IMR-90 (cell line): ENCODE measurements at regions of chr9 and their contacts with region 1.

Region 1: GRCh38 chr9:124852829-124853531 is at the start of gene WDR38:
- DNase-seq: peak; percentile 66
- ATAC-seq: peak; percentile 88
- H3K4me3 ChIP-seq: peak within 1 kb of the TSS; percentile 43
- H3K27ac ChIP-seq: no peak within 1 kb of the TSS; the same call in 1 of the 2 replicates
- H3K4me1 ChIP-seq: no peaks in the 10 kb centered on the region
- H3K27me3 ChIP-seq: no peaks in the 10 kb centered on the region
- CTCF ChIP-seq: peak; percentile 84
- POLR2A ChIP-seq: peak; percentile 55; the same call in 1 of the 2 replicates
- RAD21 ChIP-seq: peak; percentile 87
- total RNA-seq, gene WDR38: not detected in 2 replicates

Region 2: DNA sequence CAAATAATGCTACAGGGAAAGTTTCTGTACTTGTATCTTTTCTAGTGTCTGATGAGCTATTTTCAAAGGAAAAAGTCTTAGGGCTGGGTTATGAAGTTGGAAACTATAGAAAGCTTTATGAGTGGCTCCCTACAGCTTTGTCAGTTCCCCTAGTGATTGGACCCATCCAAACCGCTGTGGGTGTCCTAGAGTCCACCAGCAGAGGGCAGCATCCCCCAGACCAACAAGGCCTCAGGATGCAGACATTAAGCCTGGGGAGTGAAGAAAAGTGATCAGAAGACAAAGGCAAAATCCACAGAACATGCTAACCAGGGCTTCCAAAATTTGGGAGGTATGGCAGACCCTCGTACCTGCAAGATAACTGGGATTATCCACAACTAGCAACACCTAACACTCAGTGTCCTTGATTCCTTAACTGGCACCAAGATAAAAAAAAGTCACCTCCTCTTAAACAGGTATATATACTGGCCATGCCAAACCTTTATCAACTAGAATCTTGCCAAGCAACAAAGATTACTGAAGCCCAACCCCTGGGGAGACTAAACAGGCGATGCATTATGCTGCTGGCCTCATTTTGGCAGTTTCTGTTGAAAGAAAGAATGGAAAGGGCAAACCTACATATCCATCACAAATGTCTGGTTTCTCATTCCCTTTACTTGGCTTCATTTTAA is 235.4 kb before region 1 on chr9:
- CTCF ChIA-PET with region 1: no interaction called
- POLR2A ChIA-PET with region 1: no interaction called
- dilution Hi-C with region 1: no loop called
- in situ Hi-C with region 1: no loop called
- intact Hi-C with region 1: loop called (anchors 10 kb)
- DNase-seq: peak; percentile 79
- ATAC-seq: peak; percentile 98
- H3K4me3 ChIP-seq: no peak overlapping the region
- H3K27ac ChIP-seq: no peak overlapping the region
- H3K4me1 ChIP-seq: peaks cover 2% of the 10 kb centered on the region
- H3K27me3 ChIP-seq: peaks cover 7% of the 10 kb centered on the region
- CTCF ChIP-seq: peak; percentile 97
- POLR2A ChIP-seq: peak; percentile 44; the same call in 1 of the 2 replicates
- RAD21 ChIP-seq: peak; percentile 98

Region 3: DNA sequence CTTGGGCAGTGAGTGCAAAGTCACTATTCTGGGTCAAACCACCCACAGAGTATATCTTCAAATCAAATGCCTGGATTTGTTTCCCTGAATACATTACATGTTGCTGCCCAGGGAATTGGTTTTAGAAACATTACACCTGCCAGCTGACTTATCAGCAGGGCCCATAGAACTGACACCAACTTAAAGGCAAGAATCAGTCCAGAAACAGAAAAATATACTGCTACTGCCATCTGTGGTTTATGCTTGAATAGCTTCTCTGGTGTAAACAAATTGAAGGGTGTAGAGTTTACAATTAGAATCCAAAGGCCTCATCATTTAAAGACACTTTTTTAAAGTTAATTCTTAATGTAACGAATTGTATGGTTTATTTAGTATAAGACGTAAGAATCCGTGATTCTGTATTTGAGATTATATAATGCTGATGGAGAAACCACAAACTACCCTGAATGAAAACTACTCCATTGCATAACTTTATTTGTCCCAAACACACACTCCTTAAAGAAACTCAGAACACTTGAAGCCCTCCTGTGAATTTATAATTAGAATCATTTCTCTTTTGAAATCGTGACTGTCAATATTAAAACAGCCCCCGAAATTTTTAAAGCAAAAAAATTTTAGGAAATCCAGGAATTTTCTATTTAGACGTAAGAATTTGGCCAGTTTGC is 88.1 kb before region 1 on chr9:
- CTCF ChIA-PET with region 1: interaction called, 165 read pairs
- POLR2A ChIA-PET with region 1: interaction called, 4 read pairs
- dilution Hi-C with region 1: no loop called
- in situ Hi-C with region 1: loop called (anchors 5 kb)
- intact Hi-C with region 1: no loop called
- DNase-seq: no peak
- ATAC-seq: peak; percentile 37
- H3K4me3 ChIP-seq: no peak overlapping the region
- H3K27ac ChIP-seq: no peak overlapping the region
- H3K4me1 ChIP-seq: no peaks in the 10 kb centered on the region
- H3K27me3 ChIP-seq: peaks cover 75% of the 10 kb centered on the region
- CTCF ChIP-seq: peak; percentile 40
- POLR2A ChIP-seq: no peak
- RAD21 ChIP-seq: peak; percentile 42

Region 4: GRCh38 chr9:124771021-124771866 is 81.7 kb before region 1 on chr9 and contains the start of gene NR6A1:
- CTCF ChIA-PET with region 1: interaction called, 165 read pairs
- POLR2A ChIA-PET with region 1: interaction called, 9 read pairs
- dilution Hi-C with region 1: no loop called
- in situ Hi-C with region 1: loop called (anchors 5 kb)
- intact Hi-C with region 1: loop called (anchors 1 kb)
- DNase-seq: peak; percentile 95
- ATAC-seq: peak; percentile 93
- H3K4me3 ChIP-seq: peak within 1 kb of the TSS; percentile 58
- H3K27ac ChIP-seq: peak within 1 kb of the TSS; percentile 16
- H3K4me1 ChIP-seq: peaks cover 2% of the 10 kb centered on the region; the same call in 1 of the 2 replicates
- H3K27me3 ChIP-seq: peaks cover 40% of the 10 kb centered on the region
- CTCF ChIP-seq: no peak; the same call in 1 of the 2 replicates
- POLR2A ChIP-seq: no peak
- RAD21 ChIP-seq: no peak
- total RNA-seq, gene NR6A1: 0.28 and 0.36 TPM in 2 replicates

Region 5: DNA sequence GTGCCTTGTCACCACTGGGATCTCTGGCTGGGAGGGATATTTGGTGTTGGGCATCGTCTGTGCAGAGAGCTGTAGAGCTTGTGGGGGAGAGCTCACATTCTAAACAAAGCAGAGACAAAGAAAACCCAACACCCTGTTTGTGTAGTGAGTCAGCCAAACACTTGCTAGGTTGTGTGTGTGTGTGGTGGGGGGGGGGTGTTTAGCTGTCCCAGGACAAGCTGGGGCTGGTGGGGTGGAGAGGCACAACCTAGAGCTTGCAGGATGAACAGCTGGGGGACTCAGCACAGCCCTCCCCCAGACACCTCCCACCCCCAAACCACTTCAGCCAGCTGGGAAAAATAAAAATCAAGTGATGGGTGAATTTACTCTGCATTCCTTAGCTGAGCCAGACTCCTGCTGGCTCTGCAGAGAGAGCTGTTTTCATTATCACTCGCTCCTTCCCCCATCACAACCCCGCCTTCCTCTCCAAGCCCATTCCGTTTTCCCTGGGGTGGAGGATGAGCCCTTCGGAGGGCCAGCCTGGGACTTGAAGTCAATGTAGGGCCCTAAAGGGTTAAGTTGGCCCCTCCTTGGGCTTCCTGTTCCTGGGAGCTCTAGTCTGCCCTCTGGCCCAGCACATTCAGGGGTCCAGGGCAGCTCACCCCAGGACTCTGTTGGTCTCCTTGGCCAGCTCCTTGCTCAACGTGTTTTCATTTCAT is 73.5 kb before region 1 on chr9:
- CTCF ChIA-PET with region 1: interaction called, 165 read pairs
- POLR2A ChIA-PET with region 1: interaction called, 4 read pairs
- dilution Hi-C with region 1: no loop called
- in situ Hi-C with region 1: loop called (anchors 5 kb)
- intact Hi-C with region 1: loop called (anchors 1 kb)
- DNase-seq: peak; percentile 98
- ATAC-seq: peak; percentile 82
- H3K4me3 ChIP-seq: no peak overlapping the region
- H3K27ac ChIP-seq: peak overlapping the region; percentile 94
- H3K4me1 ChIP-seq: peaks cover 20% of the 10 kb centered on the region
- H3K27me3 ChIP-seq: peaks cover 3% of the 10 kb centered on the region; the same call in 1 of the 2 replicates
- CTCF ChIP-seq: no peak
- POLR2A ChIP-seq: no peak
- RAD21 ChIP-seq: no peak; the same call in 1 of the 2 replicates

Region 6: GRCh38 chr9:124812401-124813016 is 40.5 kb before region 1 on chr9:
- CTCF ChIA-PET with region 1: interaction called, 3 read pairs
- POLR2A ChIA-PET with region 1: interaction called, 3 read pairs
- dilution Hi-C with region 1: no loop called
- in situ Hi-C with region 1: no loop called
- intact Hi-C with region 1: loop called (anchors 2 kb)
- DNase-seq: peak; percentile 99
- ATAC-seq: peak; percentile 91
- H3K4me3 ChIP-seq: no peak overlapping the region
- H3K27ac ChIP-seq: peak overlapping the region; percentile 47
- H3K4me1 ChIP-seq: peaks cover 23% of the 10 kb centered on the region
- H3K27me3 ChIP-seq: no peaks in the 10 kb centered on the region
- CTCF ChIP-seq: peak; percentile 31
- POLR2A ChIP-seq: no peak
- RAD21 ChIP-seq: peak; percentile 41; the same call in 1 of the 2 replicates

Region 7: GRCh38 chr9:124839612-124840299 is 13.2 kb before region 1 on chr9:
- CTCF ChIA-PET with region 1: interaction called, 16 read pairs
- POLR2A ChIA-PET with region 1: no interaction called
- dilution Hi-C with region 1: no loop called
- in situ Hi-C with region 1: no loop called
- intact Hi-C with region 1: no loop called
- DNase-seq: peak; percentile 30
- ATAC-seq: peak; percentile 73
- H3K4me3 ChIP-seq: no peak overlapping the region
- H3K27ac ChIP-seq: no peak overlapping the region
- H3K4me1 ChIP-seq: peaks cover 8% of the 10 kb centered on the region
- H3K27me3 ChIP-seq: no peaks in the 10 kb centered on the region
- CTCF ChIP-seq: peak; percentile 51
- POLR2A ChIP-seq: no peak
- RAD21 ChIP-seq: peak; percentile 42